Activated CD8-positive, alpha-beta T cell treated with anti-CD3 and anti-CD28 coated beads, Interleukin-2, amount 10 ng/mL, durations not matched to agents 7 days and 5 days (primary cell): ENCODE measurements at regions of chr2 and their contacts with region 1.

Region 1: DNA sequence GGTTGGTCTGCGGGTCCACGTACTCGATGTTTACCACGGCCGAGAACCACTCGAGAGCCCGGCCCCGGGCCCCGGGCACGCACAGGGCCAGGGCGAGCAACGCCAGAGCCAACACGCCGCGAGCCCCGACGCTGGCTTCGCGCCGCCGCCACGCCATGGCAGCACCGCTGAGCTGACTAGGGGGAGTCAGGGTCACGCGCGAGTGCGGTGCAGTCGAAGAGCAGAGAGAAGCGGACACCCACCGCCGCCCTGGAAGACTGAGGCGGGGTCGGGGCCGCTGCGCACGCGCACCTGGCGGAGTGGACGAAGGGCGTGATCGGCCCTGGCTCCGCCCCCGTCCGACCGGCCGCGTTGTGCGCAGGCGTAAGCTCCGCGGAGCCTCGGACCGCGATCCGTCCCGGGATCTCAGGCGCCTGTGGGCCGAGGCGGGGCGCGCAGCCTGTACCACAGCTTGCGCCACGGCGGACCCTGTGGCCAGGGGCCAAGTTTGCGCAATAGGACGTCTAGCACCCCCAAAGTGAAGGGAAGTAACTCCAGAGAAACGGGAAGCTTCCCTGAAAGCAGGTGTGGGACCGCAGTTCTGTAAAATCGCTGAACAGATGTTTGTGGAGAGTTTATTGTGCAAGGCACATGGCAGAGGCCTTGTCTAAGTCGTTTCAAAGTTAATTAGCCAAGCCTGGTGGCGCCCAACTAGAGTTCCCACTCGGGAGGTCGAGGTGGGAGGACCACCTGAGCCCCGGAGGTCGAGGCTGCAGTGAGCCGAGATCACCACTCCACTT is at the start of gene RNF149:
- DNase-seq: peak; percentile 92
- ATAC-seq: peak; percentile 73
- H3K4me3 Mint-ChIP-seq: peak within 1 kb of the TSS; percentile 93
- H3K27ac Mint-ChIP-seq: peak within 1 kb of the TSS; percentile 94
- H3K4me1 Mint-ChIP-seq: peaks cover 66% of the 10 kb centered on the region
- H3K27me3 Mint-ChIP-seq: no peaks in the 10 kb centered on the region
- total RNA-seq, gene RNF149: 64.2 to 71.5 TPM

Region 2: DNA sequence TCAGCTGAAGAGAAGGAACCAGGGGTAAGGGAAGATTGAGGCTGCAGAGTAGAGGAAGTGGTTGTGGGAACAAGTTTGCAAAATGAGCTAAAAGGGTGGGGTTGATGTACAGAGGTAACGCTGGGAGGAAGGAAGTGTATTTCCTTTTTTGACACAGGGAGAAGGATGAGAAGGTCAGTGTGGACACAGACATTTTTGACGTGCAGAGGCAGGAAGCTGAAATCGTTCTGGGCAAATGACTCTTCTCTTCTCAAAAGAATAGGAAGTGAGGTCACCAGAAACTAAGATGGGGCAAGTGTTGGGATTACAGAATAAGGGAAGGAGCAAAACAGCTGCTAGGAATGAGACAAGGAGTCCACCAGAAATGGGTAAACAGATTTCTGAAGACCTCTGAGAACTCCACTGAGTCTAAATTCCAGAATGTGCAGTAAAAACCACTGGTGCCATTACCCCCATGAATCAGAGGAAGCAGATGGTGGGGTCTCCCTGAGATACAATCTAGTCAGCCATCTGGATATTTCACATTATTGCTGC is 19.9 kb after region 1 on chr2:
- CTCF ChIA-PET with region 1: interaction called, 4 read pairs
- POLR2A ChIA-PET with region 1: interaction called, 30 read pairs
- DNase-seq: peak; percentile 75
- ATAC-seq: peak; percentile 87
- H3K4me3 Mint-ChIP-seq: no peak overlapping the region
- H3K27ac Mint-ChIP-seq: no peak overlapping the region
- H3K4me1 Mint-ChIP-seq: peaks cover 7% of the 10 kb centered on the region
- H3K27me3 Mint-ChIP-seq: no peaks in the 10 kb centered on the region